ENCODE measurements at regions of chr1 and their contacts with region 1.

Region 1: DNA sequence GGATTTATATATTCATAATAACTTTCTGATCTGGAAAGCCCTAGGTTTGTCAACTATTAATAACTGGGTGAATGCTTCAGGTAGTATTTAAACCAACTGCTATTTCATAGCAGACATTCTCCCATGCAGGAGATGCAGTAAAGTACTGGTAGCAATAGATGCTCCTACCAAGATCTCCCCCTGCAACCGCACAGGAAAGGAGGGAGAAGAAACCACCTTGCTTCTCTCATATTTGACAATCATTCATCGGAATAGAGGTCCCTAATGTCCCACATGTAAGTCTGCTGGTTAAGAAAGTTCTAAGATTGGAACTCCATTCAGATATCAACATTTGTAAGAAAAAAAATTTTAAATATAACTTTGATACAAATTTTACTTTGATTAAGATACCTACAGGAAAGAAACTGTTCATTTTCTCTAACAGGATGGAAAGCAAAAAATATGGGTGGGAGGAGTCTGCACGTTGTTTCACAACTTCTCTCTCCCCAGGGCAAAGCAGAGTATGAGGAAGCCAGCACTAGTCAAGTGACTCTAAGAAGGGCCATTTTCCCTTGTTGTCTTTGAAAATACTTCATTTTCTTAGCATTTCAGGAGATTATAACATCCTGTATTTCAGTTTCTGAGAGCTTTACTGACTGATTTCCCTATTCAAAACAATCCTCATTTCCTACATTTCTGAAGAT is at the start of gene PYHIN1:
- DNase-seq: peak in 1 of 2 donors; percentile 71
- ATAC-seq: peak; percentile 70 to 86 (median 76)
- H3K4me3 ChIP-seq: peak within 1 kb of the TSS; percentile 75
- H3K4me3 Mint-ChIP-seq: peak within 1 kb of the TSS; percentile 98
- H3K27ac ChIP-seq: peak within 1 kb of the TSS; percentile 90
- H3K27ac Mint-ChIP-seq: peak within 1 kb of the TSS; percentile 90 to 95
- H3K4me1 ChIP-seq: peaks cover 24% of the 10 kb centered on the region
- H3K4me1 Mint-ChIP-seq: peaks cover 55 to 64% of the 10 kb centered on the region in 2 donors
- H3K27me3 ChIP-seq: no peaks in the 10 kb centered on the region
- H3K27me3 Mint-ChIP-seq: no peaks in the 10 kb centered on the region
- CTCF ChIP-seq: no peak
- total RNA-seq, gene PYHIN1: 171 to 313 (median 197) TPM

Region 2: GRCh38 chr1:158819461-158820443 is 111.4 kb before region 1 on chr1:
- intact Hi-C with region 1: loop called (anchors 2 kb)
- DNase-seq: peak in 1 of 2 donors; percentile 46
- ATAC-seq: peak; percentile 94 to 97 (median 97)
- H3K4me3 ChIP-seq: no peak overlapping the region
- H3K4me3 Mint-ChIP-seq: peak overlapping the region; percentile 84
- H3K27ac ChIP-seq: peak overlapping the region; percentile 63
- H3K27ac Mint-ChIP-seq: peak overlapping the region; percentile 85 to 87
- H3K4me1 ChIP-seq: peaks cover 14% of the 10 kb centered on the region
- H3K4me1 Mint-ChIP-seq: peaks cover 22 to 29% of the 10 kb centered on the region in 2 donors
- H3K27me3 ChIP-seq: no peaks in the 10 kb centered on the region
- H3K27me3 Mint-ChIP-seq: no peaks in the 10 kb centered on the region
- CTCF ChIP-seq: no peak

Region 3: DNA sequence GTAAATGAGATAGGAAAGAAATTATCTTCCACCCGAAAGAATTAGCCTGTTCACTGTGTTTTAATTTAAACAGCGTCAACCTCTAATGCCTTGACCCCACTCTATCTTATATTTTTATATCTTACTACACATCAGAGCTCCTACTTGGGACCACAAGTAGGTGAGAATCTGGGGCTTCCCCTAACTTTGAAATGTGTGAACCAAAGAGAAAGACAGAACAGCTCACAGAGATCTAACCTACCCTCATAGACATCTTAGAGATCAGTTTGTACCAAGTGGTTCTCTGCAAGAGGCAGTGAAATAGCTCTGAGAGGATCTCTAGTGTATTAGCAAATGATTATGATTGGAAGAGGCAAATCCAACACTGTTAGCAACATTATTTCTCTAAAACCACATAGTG is 47.5 kb after region 1 on chr1:
- intact Hi-C with region 1: loop called (anchors 2 kb)
- DNase-seq: peak in 1 of 2 donors; percentile 65
- ATAC-seq: peak; percentile 93 to 99 (median 97)
- H3K4me3 ChIP-seq: no peak overlapping the region
- H3K4me3 Mint-ChIP-seq: peak overlapping the region; percentile 76
- H3K27ac ChIP-seq: peak overlapping the region; percentile 56
- H3K27ac Mint-ChIP-seq: peak overlapping the region; percentile 78 to 92
- H3K4me1 ChIP-seq: peaks cover 18% of the 10 kb centered on the region
- H3K4me1 Mint-ChIP-seq: peaks cover 78 to 79% of the 10 kb centered on the region in 2 donors
- H3K27me3 ChIP-seq: no peaks in the 10 kb centered on the region
- H3K27me3 Mint-ChIP-seq: no peaks in the 10 kb centered on the region
- CTCF ChIP-seq: no peak